ENCODE measurements at regions of chr20 and their contacts with region 1.

Region 1: GRCh38 chr20:40962730-40963504 is 65.7 kb upstream of the TOP1 start:
- DNase-seq: peak; percentile 81
- ATAC-seq: peak; percentile 88
- H3K4me3 Mint-ChIP-seq: no peak overlapping the region
- H3K27ac Mint-ChIP-seq: no peak overlapping the region
- H3K4me1 Mint-ChIP-seq: 0 out of 2 replicates have a peak, but pooled peaks cover 2% of the 10 kb centered on the region
- H3K27me3 Mint-ChIP-seq: no peaks in the 10 kb centered on the region
- CTCF ChIP-seq: peak; percentile 96

Region 2: DNA sequence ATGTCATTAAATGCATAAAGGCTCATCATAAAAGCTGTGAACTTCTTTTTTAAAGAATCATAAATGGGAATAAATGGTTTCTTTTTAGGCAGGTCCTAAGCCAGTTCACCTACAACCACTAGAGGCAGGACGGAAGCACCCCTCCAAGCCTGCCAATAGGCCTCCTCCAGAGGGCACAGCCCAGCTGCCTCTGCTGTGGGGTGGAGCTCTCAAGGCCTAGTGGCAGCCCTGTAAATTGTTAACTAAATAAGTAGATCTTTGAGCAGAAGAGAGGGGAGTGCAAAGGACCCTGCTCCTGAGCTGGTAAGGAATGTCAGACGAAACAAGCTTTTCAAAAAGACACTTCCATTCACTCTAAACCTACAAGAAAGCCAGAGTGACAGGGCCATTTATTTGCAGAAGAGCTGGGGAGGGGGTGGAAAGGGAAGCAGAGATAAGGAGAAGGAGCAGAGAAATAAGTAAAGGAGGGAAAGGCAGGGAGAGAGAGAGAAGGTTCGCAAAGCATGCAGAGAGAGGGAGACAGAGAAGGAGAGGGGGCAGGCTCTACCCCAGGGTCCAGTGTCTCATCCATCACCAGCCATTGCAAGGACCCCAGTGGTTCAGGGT is 255.8 kb before region 1 on chr20:
- CTCF ChIA-PET with region 1: interaction called, 16 read pairs
- POLR2A ChIA-PET with region 1: no interaction called
- DNase-seq: peak; percentile 70
- ATAC-seq: peak; percentile 100
- H3K4me3 Mint-ChIP-seq: no peak overlapping the region
- H3K27ac Mint-ChIP-seq: peak overlapping the region; percentile 52; the same call in 1 of the 2 replicates
- H3K4me1 Mint-ChIP-seq: peaks cover 11% of the 10 kb centered on the region
- H3K27me3 Mint-ChIP-seq: no peaks in the 10 kb centered on the region; the same call in none of the 2 replicates
- CTCF ChIP-seq: no peak

Region 3: DNA sequence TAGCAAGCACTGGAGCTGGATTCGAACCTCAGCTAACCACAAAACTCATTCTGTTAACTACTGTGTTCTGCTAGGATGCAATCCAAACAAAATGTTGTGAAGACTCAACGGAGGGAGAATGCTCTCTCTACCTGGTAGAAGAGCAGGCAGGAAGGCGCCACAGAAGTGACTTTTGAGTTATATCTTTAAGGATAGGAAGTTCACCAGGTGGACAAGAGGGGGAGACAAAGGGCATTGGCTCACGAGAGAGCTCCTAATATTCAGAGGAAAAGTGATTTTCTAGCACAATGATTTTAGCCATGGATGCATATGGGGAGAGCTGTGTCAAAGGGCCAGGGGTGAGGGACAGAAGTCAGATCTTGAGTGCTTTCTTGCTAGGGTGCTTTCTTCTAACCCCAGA is 165.5 kb before region 1 on chr20:
- CTCF ChIA-PET with region 1: interaction called, 26 read pairs
- POLR2A ChIA-PET with region 1: no interaction called
- DNase-seq: no peak
- ATAC-seq: peak; percentile 81
- H3K4me3 Mint-ChIP-seq: no peak overlapping the region
- H3K27ac Mint-ChIP-seq: no peak overlapping the region
- H3K4me1 Mint-ChIP-seq: no peaks in the 10 kb centered on the region
- H3K27me3 Mint-ChIP-seq: no peaks in the 10 kb centered on the region
- CTCF ChIP-seq: peak; percentile 30; the same call in 1 of the 2 replicates

Region 4: GRCh38 chr20:40945754-40946450 is 17.0 kb before region 1 on chr20:
- CTCF ChIA-PET with region 1: interaction called, 32 read pairs
- POLR2A ChIA-PET with region 1: interaction called, 3 read pairs
- DNase-seq: peak; percentile 73
- ATAC-seq: peak; percentile 96
- H3K4me3 Mint-ChIP-seq: no peak overlapping the region
- H3K27ac Mint-ChIP-seq: no peak overlapping the region
- H3K4me1 Mint-ChIP-seq: peaks cover 26% of the 10 kb centered on the region
- H3K27me3 Mint-ChIP-seq: peaks cover 6% of the 10 kb centered on the region
- CTCF ChIP-seq: no peak

Region 5: GRCh38 chr20:41095110-41095969 is 132.4 kb after region 1 on chr20:
- CTCF ChIA-PET with region 1: interaction called, 18 read pairs
- POLR2A ChIA-PET with region 1: no interaction called
- DNase-seq: peak; percentile 56
- ATAC-seq: peak; percentile 58
- H3K4me3 Mint-ChIP-seq: no peak overlapping the region
- H3K27ac Mint-ChIP-seq: no peak overlapping the region
- H3K4me1 Mint-ChIP-seq: no peaks in the 10 kb centered on the region
- H3K27me3 Mint-ChIP-seq: no peaks in the 10 kb centered on the region
- CTCF ChIP-seq: peak; percentile 70

Region 6: DNA sequence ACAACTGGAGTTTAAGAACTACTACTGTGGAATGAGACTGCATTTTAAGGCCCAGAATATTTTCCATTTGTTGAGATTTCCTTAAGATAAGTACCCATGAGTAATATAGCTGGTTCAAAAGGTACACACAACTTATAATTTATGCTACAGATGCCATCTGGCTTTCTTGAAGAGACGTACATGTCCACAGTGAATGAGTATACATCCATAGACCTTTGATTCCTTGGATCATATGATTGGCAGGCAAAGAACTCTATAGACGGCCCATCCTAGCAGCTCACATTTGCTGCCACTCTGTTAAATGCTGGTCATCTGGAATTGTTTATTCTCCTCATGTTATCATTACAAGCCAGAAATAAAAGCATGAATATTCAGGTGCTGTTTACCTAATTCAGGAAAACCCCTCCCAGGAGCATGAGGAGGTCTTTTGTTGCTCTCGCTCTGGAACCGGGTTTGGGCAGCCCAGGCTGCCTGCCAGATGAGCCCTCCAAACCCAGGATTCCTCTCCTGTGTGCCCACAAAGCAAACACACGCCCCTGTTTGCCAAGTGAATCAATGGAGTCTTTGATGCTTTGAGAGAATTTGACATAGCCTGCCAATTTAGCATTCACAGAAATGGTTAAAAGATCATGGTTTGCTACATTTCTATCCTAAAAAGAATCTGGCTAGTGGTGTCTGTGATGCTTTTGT is 156.8 kb after region 1 on chr20:
- CTCF ChIA-PET with region 1: no interaction called
- POLR2A ChIA-PET with region 1: no interaction called
- DNase-seq: no peak
- ATAC-seq: no peak
- H3K4me3 Mint-ChIP-seq: no peak overlapping the region
- H3K27ac Mint-ChIP-seq: no peak overlapping the region
- H3K4me1 Mint-ChIP-seq: no peaks in the 10 kb centered on the region
- H3K27me3 Mint-ChIP-seq: no peaks in the 10 kb centered on the region
- CTCF ChIP-seq: no peak

Region 7: DNA sequence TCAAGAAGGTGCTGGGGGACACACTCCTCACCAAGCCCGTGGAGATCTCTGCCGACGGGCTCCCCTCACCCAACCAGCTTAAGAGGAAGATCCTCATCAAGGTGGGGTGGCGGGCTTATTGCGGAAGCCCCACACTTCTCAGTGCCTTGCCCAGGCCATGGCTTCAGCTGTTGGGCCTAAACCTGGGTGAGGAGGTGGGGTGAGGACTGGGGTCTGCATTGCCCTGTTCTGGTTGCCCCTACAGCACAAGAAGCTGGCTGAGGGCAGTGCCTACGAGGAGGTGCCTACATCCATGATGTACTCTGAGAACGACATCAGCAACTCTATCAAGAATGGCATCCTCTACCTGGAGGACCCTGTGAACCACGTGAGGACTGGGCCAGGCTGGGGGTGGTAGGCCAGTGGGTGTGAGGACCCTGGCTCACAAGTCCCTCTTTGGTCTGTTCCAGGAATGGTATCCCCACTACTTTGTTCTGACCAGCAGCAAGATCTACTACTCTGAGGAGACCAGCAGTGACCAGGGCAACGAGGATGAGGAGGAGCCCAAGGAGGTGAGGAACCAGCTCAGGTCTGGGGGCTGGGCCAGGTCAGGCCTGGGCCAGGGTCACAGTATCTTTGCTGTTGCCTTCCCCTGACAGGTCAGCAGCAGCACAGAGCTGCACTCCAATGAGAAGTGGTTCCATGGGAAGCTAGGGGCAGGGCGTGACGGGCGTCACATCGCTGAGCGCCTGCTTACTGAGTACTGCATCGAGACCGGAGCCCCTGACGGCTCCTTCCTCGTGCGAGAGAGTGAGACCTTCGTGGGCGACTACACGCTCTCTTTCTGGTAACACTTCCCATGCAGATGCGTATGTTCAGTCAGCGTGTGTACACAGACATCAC is 202.3 kb after region 1 on chr20:
- CTCF ChIA-PET with region 1: no interaction called
- POLR2A ChIA-PET with region 1: no interaction called
- DNase-seq: no peak
- ATAC-seq: no peak
- H3K4me3 Mint-ChIP-seq: no peak overlapping the region
- H3K27ac Mint-ChIP-seq: no peak overlapping the region
- H3K4me1 Mint-ChIP-seq: no peaks in the 10 kb centered on the region
- H3K27me3 Mint-ChIP-seq: no peaks in the 10 kb centered on the region
- CTCF ChIP-seq: no peak

Measured in WTC11 (cell line).